Cardiac septum (tissue), 1 donor: ENCODE measurements at regions of chr14 and their contacts with region 1.

Region 1: GRCh38 chr14:103628684-103629502 is at the start of gene KLC1:
- DNase-seq: peak; percentile 94
- total RNA-seq, gene KLC1: 219 TPM

Region 2: GRCh38 chr14:103562429-103563225 is 66.3 kb before region 1 on chr14 and contains the starts of genes BAG5 and COA8:
- intact Hi-C with region 1: no loop called
- DNase-seq: peak; percentile 95
- total RNA-seq, gene BAG5: 20.1 TPM
- total RNA-seq, gene COA8: 43.8 TPM

Region 3: DNA sequence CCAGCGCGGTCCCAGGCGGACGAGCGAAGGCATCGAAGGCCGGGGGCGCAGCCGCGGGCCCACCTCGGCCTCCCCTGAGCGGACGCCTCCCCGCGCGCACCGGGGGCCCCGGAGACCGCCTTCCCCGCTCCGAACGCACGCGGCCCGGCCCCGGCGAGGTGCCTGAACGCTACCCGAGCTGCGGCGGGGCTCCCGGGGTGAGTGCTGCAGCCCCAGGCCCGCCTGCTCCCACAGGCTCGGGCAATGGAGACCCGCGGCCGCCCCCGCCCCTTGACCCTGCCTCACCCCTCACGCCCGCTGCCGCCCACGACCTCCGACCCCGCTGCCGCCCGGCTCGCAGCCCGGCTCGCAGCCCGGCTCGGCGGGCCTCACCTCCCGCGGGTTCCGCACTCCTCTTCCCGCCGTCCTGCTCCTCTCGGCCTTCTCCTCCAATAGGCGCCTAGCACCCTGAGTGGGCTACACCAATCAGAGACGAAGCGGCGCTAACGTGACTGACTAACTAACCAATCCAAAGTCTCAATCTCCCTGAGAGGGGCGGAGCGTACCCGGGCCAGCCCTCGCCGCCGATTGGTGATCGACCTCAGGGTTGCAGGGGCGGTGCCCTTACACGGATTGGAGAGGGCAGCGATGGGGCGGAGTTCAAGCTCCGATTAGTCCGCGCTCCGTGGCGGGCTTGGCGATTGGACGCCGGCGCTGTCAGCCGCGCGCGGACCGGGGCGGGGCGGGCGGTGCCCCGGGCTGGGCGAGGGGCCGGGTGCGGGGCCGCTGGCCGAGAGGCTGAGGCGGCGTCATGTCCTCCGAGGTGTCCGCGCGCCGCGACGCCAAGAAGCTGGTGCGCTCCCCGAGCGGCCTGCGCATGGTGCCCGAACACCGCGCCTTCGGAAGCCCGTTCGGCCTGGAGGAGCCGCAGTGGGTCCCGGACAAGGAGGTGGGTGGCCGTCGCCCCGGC is 86.4 kb after region 1 on chr14 and contains the starts of genes XRCC3 and ZFYVE21:
- intact Hi-C with region 1: loop called (anchors 5 kb)
- DNase-seq: peak; percentile 99
- total RNA-seq, gene XRCC3: 3.9 TPM
- total RNA-seq, gene ZFYVE21: 60.9 TPM